ENCODE measurements at regions of chr17 and their contacts with region 1.

Region 1: DNA sequence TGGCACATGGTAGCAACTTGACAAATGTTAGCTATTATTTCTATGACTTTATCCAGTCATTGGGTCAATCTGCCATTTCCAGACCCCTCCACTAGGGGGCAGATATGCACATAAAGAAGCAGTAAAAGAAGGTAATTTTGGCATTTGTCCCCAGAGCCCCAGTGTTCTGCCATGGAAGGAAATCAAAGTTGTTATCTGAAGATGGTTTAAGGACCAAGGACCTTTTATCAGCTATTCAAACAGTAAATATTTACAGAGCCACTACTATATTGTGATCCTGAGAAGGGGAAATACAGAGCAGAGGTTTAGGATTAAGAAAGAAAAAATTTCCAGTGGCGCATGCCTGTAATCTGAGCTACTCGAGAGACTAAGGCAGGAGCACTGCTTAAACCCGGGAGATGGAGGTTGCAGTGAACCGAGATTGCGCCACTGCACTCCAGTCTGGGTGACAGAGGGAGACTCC is 20.0 kb downstream of the TRAF4 start:
- DNase-seq: peak; percentile 93
- H3K4me3 Mint-ChIP-seq: no peak overlapping the region
- H3K27ac Mint-ChIP-seq: no peak overlapping the region
- H3K4me1 Mint-ChIP-seq: peaks cover 12% of the 10 kb centered on the region
- H3K27me3 Mint-ChIP-seq: no peaks in the 10 kb centered on the region

Region 2: GRCh38 chr17:28623696-28624095 is 140.1 kb before region 1 on chr17:
- CTCF ChIA-PET with region 1: no interaction called
- intact Hi-C with region 1: no loop called
- DNase-seq: no peak
- H3K4me3 Mint-ChIP-seq: no peak overlapping the region
- H3K27ac Mint-ChIP-seq: no peak overlapping the region
- H3K4me1 Mint-ChIP-seq: peaks cover 7% of the 10 kb centered on the region
- H3K27me3 Mint-ChIP-seq: no peaks in the 10 kb centered on the region

Region 3: DNA sequence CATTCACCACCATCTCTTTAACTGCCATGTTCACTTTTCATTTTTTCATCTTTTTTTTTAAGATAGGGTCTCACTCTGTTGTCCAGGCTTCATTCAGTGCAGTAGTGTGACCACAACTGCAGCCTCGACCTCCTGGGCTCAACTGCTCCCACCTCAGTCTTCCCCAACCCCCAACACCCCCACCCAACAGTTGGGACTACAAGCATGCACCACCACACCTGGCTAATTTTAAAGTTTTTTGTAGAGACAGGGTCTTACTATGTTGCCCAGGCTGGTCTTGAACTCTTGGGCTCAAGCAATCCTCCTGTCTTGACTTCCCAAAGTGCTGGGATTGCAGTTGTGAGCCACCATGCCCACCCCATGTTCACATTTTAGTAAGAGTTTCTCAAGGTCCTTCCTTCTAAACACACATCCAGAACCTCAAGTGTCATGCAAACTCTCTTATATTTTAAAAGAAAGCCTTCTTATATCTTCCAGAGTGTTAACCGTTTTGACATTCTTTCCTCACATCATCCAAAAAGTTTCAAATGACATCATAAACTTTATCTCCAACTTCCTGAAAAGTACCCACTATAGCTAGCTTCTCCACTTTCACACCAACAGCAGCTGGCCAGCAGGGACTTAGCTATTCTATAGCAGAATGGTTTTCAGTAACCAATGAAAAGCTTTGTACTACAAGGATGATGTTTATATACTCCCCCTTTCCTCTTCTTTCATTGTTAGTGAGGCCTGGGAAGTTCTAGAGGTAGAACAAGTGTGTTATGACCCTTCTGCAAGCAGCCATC is 29.2 kb after region 1 on chr17:
- CTCF ChIA-PET with region 1: interaction called, 18 read pairs
- intact Hi-C with region 1: no loop called
- DNase-seq: no peak
- H3K4me3 Mint-ChIP-seq: no peak overlapping the region
- H3K27ac Mint-ChIP-seq: no peak overlapping the region
- H3K4me1 Mint-ChIP-seq: peaks cover 29% of the 10 kb centered on the region
- H3K27me3 Mint-ChIP-seq: no peaks in the 10 kb centered on the region

Region 4: DNA sequence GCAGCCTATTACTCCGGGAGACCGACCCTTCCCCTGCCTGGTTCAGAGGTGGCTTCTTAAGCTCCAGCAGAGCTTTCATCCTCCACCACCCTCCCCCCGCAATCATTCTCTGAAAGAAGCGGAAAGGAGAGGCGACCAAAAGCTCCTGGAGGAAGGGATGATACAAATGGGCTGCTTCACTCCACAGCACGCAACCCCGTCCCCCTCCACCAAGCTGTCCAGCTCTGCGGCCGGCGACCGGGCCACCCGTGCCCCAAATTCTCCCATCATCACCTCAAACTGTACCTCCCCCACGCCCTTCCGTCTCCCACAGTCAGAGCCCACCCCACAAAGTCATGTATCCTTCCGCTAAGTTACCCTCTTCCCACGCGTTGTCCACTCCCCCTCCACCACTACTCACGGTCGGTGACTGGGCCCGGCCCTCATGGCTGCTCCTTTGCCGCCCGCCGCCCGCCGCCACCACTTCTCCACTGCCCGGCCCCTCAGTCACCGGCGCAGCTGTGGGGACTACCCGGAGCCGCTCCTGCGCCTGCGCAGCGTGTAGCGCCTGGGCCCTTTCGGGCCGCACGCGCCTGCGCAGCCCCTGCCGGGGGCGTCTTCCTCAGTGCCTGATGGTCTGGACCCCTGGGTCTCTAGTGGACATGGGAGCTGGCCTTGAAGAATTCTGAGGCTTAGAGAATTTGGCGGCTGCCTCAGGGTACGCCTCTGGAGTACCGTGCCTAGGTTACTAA is 78.6 kb after region 1 on chr17 and contains the start of gene FAM222B:
- CTCF ChIA-PET with region 1: interaction called, 32 read pairs
- intact Hi-C with region 1: loop called (anchors 1 kb)
- DNase-seq: peak; percentile 88
- H3K4me3 Mint-ChIP-seq: peak within 1 kb of the TSS; percentile 99
- H3K27ac Mint-ChIP-seq: peak within 1 kb of the TSS; percentile 95
- H3K4me1 Mint-ChIP-seq: peaks cover 31% of the 10 kb centered on the region
- H3K27me3 Mint-ChIP-seq: no peaks in the 10 kb centered on the region
- total RNA-seq, gene FAM222B: 11.2 TPM

Region 5: DNA sequence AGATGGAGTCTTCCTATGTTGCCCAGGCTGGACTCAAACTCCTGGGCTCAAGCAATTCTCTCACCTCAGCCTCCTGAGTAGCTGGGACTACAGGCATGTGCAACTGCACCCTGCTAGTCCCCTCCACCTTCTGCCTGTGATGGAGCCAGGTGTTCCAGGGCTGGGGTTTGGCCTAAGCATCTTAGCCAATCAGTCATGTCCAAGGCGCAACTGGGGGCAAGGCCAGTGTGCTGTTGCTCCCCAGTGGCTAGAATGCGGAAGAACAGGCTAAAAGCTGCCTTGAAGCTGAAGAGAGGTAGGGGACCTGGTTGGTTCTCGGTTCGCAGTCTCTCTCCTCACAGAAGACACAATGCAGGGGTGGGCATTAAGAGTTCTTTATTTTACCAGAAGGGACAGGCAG is 115.1 kb after region 1 on chr17:
- CTCF ChIA-PET with region 1: interaction called, 14 read pairs
- intact Hi-C with region 1: loop called (anchors 1 kb)
- DNase-seq: peak; percentile 55
- H3K4me3 Mint-ChIP-seq: no peak overlapping the region
- H3K27ac Mint-ChIP-seq: peak overlapping the region; percentile 8
- H3K4me1 Mint-ChIP-seq: peaks cover 37% of the 10 kb centered on the region
- H3K27me3 Mint-ChIP-seq: no peaks in the 10 kb centered on the region

Region 6: DNA sequence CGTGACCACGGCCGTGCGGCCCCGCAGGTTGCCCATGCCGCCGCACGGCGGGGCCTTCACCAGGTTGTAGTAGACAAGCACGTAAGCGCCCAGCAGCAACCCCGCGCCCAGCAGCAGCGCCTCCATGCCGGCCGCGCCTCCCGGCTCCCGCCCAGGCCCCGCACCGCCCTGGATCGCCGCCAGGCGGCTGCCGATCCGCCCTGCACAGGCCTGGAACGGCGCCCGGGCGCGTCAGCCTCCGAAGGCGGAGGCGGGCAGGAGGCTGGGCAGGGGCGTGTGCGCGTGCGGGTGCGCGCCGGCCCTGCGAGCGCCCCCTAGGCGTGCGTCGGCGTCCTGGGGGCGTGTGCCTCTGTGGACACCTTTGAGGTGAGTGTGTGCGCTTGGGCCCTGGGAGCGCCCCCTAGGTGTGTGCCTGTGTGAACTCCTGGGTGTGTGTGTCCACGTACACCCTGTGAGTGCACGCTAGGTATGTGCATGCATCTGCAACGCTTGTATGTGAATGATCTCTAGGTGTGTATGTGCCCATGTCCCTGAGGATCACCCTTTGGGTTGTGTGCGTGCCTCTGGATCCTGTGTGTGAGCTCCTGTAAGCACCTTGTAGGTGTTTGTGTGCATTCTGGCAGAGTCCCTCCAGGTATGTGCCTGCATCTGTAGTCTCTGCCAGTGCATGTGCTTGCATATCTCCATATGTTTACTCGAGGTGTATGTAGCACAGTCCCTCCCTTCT is 139.1 kb after region 1 on chr17 and contains the start of gene DHRS13:
- CTCF ChIA-PET with region 1: interaction called, 19 read pairs
- intact Hi-C with region 1: loop called (anchors 1 kb)
- DNase-seq: peak; percentile 93
- H3K4me3 Mint-ChIP-seq: peak within 1 kb of the TSS; percentile 98
- H3K27ac Mint-ChIP-seq: peak within 1 kb of the TSS; percentile 88
- H3K4me1 Mint-ChIP-seq: peaks cover 35% of the 10 kb centered on the region
- H3K27me3 Mint-ChIP-seq: no peaks in the 10 kb centered on the region
- total RNA-seq, gene DHRS13: 20.1 to 20.9 TPM

Region 7: GRCh38 chr17:29116804-29117772 is 353.3 kb after region 1 on chr17:
- CTCF ChIA-PET with region 1: interaction called, 9 read pairs
- intact Hi-C with region 1: loop called (anchors 5 kb)
- DNase-seq: peak; percentile 88
- H3K4me3 Mint-ChIP-seq: no peak overlapping the region
- H3K27ac Mint-ChIP-seq: no peak overlapping the region
- H3K4me1 Mint-ChIP-seq: peaks cover 9% of the 10 kb centered on the region
- H3K27me3 Mint-ChIP-seq: no peaks in the 10 kb centered on the region

Measured in activated naive CD4-positive, alpha-beta T cell treated with anti-CD3 and anti-CD28 coated beads for 36 hours (primary cell).